ENCODE measurements at regions of chr3 and their contacts with region 1.

Region 1: DNA sequence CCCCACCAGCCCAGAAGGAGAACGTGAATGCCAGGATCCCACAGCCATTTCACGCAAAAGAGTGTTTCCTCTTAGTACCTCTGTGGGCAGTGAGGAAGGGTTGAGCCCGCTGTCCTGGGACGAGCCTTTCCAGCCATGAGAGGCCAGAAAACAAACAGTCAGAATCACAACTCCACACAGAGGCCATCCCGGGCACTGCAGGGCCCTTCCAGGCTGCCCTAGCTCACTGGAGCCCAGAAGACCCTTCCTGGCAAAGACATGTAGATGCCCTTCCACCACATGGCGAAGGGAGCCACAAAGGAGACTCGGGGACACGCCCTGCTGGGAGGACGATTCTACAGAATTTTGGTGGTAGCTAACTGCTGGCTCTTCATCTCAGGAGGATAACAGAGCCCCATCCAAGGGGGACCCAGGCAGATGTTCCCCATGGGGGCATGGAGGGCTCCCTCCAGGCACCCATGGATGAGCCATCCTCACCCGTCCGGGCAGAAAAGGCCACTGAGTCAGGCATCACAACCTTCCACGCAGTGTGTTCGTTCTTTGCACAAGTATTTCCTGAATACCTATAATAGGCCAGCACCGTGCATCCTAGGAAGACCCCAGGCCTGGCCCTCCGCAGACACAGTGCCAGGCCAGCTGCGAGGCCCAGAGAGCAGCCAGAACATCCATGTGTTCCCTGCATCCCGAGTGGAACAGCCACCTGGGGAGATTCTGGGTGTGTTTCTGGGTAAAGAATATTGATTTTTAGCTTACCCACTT is 47.2 kb downstream of the SLC12A8 start:
- DNase-seq: peak; percentile 74
- ATAC-seq: peak; percentile 90

Region 2: GRCh38 chr3:124845406-124845805 is 320.0 kb before region 1 on chr3:
- intact Hi-C with region 1: no loop called
- DNase-seq: no peak
- ATAC-seq: peak; percentile 79

Region 3: DNA sequence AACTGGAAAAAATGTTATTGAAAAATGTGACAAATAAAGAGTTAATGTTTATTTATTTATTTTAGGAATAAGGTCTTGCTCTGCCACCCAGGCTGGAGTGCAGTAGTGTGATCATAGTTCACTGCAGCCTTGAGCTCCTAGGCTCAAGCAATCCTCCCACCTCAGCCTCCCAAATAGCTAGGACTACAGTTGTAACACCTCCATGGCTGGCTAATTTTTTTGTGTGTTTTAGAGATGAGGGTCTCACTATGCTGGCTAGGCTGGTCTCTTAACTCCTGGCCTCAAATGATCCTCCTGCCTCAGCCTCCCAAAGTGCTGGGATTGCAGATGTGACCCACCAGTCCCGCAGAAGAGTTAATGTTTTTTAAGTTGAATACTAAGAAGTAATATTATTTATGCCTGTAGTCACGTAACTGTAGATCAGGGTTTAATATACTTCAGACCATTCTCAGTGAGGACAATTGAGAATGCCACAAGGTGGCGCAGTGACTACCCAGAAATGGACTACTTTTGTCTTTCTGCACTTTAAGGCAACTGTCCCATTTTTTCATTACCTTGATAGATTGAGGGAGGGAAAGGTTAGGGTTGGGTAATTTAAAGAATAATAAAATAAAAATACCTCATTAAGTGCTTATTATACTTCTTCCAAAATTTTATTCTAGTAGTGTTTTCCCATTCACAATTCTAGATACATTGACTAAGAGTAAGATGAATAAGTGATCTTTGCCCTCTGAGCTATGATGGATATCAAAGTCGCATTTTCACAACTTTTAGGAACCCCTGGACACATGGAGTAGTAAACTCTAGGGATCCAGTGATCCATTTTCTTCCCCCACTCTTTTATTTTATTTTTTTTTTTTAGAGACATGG is 236.8 kb before region 1 on chr3:
- intact Hi-C with region 1: loop called (anchors 5 kb)
- DNase-seq: peak; percentile 61
- ATAC-seq: peak; percentile 80

Region 4: GRCh38 chr3:124995460-124995994 is 169.8 kb before region 1 on chr3:
- intact Hi-C with region 1: loop called (anchors 5 kb)
- DNase-seq: peak; percentile 56
- ATAC-seq: peak; percentile 73

Region 5: GRCh38 chr3:125257536-125257935 is 92.2 kb after region 1 on chr3:
- intact Hi-C with region 1: no loop called
- DNase-seq: no peak
- ATAC-seq: no peak